Motor neuron (in vitro differentiated cells): ENCODE measurements at regions of chr6 and their contacts with region 1.

Region 1: DNA sequence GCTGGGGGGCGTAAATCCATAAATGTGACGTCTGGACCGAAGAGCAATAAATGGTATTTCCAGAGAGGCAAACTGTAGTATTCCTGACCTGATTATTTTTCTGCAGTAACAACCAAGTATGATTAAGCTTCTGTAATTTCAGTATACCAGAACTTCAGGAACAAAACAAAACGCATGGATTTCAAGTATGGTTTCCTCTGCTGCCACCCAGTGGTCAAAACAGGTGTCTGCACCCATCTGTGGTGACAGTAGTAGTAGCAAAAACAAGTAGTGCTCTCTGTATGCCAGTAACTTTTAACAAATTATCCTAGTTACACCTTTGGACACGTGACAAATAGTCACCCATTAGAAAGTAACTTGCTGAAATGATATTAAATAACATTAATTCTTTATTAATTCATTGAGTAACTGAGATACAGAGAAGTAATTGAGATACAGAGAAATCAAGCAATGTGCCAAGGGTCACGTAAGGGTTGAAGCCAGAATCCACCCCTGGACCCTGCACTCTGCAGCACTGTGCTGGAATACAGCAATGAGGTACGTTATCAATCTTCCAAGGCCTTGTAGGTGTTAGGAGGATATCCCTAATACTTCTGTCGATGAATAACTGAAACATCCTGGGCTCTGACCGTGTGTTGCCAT is 7.9 kb downstream of the CALHM4 start:
- ATAC-seq: peak; percentile 32 to 72 (median 62)
- H3K4me3 ChIP-seq: no peak overlapping the region
- H3K27ac ChIP-seq: no peak overlapping the region
- H3K4me1 ChIP-seq: no peaks in the 10 kb centered on the region

Region 2: DNA sequence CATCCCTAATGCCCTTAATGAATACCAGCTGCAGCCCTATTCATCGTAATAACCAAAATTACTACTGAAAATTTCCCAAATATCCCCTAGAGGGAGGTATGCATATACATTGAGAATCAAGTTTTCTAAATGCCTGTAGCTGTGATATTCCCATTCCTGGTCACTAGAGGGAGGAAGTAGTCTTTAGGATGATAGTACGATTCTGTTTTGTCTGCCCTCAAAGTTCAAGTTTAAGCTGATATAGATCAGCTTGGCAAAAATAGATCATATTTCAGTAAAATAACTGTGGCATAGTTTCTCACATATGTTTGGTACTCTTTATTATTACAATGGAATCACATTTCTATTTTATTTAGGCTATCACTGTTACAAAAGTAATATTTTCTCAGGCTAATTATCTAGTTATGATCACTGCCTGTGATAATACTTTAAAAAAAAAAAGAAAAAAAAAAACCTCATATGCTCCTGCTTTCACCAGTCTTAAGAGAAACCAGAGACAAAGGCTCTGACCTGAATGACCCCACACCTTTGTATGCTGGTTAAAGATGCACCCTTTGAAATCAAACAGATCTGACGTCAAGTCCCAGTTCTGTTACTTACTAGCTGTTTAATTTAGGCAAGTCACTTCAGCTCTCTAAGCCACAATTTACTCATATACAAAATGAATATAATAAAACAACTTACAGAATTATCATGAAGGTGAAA is 292.8 kb before region 1 on chr6:
- in situ Hi-C with region 1: loop called in 2 of 9 experiments (anchors 10 to 25 kb)
- ATAC-seq: peak; percentile 62 to 87 (median 77)
- H3K4me3 ChIP-seq: no peak overlapping the region
- H3K27ac ChIP-seq: no peak overlapping the region
- H3K4me1 ChIP-seq: no peaks in the 10 kb centered on the region